Heart right ventricle (tissue), 16 donors: ENCODE measurements at regions of chr16 and their contacts with region 1.

Region 1: GRCh38 chr16:89633064-89633631 is 19.7 kb downstream of the DPEP1 start:
- DNase-seq: no peak
- ATAC-seq: no peak
- H3K4me3 ChIP-seq: no peak overlapping the region
- H3K27ac ChIP-seq: no peak overlapping the region
- H3K4me1 ChIP-seq: no peaks in the 10 kb centered on the region
- H3K27me3 ChIP-seq: peaks cover 15 to 38% (median 30%) of the 10 kb centered on the region in 7 donors
- CTCF ChIP-seq: no peak

Region 2: DNA sequence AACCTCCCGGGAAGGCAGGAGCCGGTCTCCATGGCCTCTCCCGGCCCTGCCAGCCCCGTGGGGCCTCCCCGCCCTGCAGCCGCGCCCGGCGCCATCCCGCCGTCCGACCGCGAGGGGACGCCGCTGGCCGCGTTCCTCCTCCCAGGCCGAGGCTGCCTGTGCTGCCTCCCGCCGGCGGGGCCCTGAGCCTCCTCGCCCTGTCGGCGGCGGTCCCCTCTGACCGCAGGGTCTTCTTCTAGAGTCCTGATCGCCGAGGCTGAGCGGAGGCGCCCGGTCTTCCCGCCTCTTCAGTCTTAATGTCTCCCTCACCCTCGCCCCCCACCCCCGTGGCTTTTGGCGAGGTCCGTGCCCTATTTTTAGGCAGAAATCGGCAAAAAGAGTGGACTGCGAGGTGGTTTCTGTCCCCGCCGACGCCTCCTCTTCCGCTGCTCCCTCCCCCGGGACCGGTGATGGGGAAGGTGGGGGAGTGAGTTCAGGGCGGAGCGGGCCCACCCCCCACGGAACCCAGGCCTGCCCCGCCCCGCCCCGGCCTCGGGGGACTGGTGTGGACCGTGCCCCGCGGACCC is 58.4 kb before region 1 on chr16:
- intact Hi-C with region 1: loop called in 2 of 10 experiments (anchors 2 to 10 kb)
- DNase-seq: peak in 1 of 2 donors; percentile 51
- ATAC-seq: peak; percentile 44 to 71 (median 60)
- H3K4me3 ChIP-seq: peak overlapping the region in 9 of 10 donors; percentile 14 to 46 (median 36)
- H3K27ac ChIP-seq: no peak overlapping the region
- H3K4me1 ChIP-seq: peaks cover 11 to 22% (median 17%) of the 10 kb centered on the region in 9 donors
- H3K27me3 ChIP-seq: peaks cover 33 to 69% (median 62%) of the 10 kb centered on the region in 7 donors
- CTCF ChIP-seq: peak; percentile 19 to 80 (median 64)

Region 3: GRCh38 chr16:89581045-89581690 is 52.0 kb before region 1 on chr16:
- intact Hi-C with region 1: loop called in 3 of 10 experiments (anchors 2 to 10 kb)
- DNase-seq: no peak
- ATAC-seq: no peak
- H3K4me3 ChIP-seq: no peak overlapping the region
- H3K27ac ChIP-seq: no peak overlapping the region
- H3K4me1 ChIP-seq: peaks cover 0 to 13% (median 8%) of the 10 kb centered on the region in 9 donors
- H3K27me3 ChIP-seq: peaks cover 10 to 17% (median 14%) of the 10 kb centered on the region in 7 donors
- CTCF ChIP-seq: no peak

Region 4: DNA sequence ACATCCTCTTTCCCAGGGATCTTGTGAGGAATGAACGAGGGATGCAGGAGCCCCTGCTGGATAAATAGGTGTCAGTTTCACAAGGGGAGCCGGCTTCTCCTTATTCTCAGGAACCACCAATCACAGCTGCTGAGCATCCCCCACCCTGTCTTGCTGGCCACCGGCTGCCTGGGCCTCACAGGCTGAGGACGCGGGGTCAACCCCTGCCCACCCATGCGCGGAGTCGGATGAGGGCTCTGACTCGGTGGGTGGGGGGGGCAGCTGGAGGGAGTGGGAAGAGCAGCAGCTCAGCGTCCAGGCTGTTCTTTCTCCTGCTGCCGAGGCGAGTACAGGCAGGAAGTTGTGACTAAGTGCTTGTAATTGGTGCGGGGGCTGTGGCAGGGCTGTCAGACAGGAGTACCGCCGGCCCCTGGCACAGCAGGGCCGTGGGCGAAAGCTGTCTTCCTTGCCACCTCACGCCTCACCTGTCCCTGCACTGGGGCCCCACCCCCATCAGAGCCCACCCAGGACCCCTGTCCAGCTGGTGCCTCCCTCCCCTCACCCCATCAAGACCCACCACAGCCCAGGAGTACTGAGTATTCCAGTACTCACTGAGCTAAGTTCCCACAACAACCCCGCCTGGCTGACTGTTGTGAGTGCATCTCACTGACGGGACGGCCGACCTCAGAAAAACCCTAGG is 30.7 kb before region 1 on chr16:
- intact Hi-C with region 1: no loop called
- DNase-seq: peak in 1 of 2 donors; percentile 29
- ATAC-seq: peak in 7 of 8 donors; percentile 57 to 88 (median 75)
- H3K4me3 ChIP-seq: no peak overlapping the region
- H3K27ac ChIP-seq: no peak overlapping the region
- H3K4me1 ChIP-seq: peaks cover 0 to 14% (median 7%) of the 10 kb centered on the region in 9 donors
- H3K27me3 ChIP-seq: peaks cover 0 to 28% (median 12%) of the 10 kb centered on the region in 7 donors
- CTCF ChIP-seq: no peak